Posterior vena cava (tissue), 2 donors: ENCODE measurements at regions of chr22 and their contacts with region 1.

Region 1: GRCh38 chr22:20965104-20965887 is 1.8 kb upstream of the AIFM3 start:
- DNase-seq: no peak

Region 2: GRCh38 chr22:20899827-20900423 is 65.4 kb before region 1 on chr22:
- intact Hi-C with region 1: no loop called
- DNase-seq: no peak

Region 3: GRCh38 chr22:20933910-20934309 is 31.4 kb before region 1 on chr22:
- intact Hi-C with region 1: loop called in 1 of 2 experiments (anchors 2 kb)
- DNase-seq: no peak

Region 4: DNA sequence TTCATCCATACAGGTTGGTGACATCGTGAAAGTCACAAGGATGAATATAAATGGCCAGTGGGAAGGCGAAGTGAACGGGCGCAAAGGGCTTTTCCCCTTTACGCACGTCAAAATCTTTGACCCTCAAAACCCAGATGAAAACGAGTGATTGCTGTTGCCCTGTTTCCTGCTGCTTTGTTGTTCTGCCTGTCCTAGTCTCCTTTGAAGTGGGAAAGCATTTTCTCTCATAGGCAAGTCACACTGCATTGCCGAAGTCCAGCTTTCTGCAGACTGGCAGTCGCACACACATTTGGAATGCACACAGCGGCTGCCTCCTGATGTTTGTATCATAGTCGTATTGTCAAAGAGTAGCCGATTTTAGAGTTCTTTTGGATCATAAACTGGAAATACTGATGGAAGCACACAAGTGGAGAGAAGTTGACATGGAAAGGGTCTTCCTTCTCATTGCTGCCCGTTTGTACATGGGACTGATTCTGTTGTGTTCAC is 15.6 kb before region 1 on chr22:
- intact Hi-C with region 1: loop called in 1 of 2 experiments (anchors 2 kb)
- DNase-seq: peak; percentile 16